ENCODE measurements at regions of chr6 and their contacts with region 1.

Region 1: DNA sequence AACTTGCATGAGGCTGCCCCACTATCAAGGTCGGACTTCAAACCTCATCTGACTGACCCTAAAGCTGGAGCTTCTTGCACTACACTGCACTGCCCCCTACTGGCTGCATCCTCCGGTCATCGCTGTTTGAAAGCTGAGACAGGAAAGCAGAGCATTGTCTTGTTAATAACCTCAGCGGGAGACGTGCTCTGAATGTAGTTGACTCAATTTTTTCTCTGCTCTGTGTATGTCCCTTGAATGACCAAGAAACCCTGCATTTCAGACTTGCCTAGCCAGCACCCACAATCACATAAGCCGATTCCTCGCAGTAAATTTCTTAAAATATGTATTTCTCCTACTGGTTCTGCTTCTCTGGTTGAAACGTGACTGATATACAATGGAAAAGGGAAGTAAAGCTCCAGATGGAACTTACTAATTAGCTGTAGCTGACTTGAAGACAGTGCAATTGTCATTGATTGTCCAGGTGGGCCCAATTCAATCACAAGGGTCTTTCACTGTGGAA is 27.8 kb downstream of the TCF21 start:
- DNase-seq: peak; percentile 87
- ATAC-seq: peak; percentile 79 to 84
- H3K4me3 ChIP-seq: no peak overlapping the region
- H3K27ac ChIP-seq: no peak overlapping the region
- H3K4me1 ChIP-seq: peaks cover 4% of the 10 kb centered on the region
- H3K27me3 ChIP-seq: no peaks in the 10 kb centered on the region
- CTCF ChIP-seq: peak; percentile 93

Region 2: DNA sequence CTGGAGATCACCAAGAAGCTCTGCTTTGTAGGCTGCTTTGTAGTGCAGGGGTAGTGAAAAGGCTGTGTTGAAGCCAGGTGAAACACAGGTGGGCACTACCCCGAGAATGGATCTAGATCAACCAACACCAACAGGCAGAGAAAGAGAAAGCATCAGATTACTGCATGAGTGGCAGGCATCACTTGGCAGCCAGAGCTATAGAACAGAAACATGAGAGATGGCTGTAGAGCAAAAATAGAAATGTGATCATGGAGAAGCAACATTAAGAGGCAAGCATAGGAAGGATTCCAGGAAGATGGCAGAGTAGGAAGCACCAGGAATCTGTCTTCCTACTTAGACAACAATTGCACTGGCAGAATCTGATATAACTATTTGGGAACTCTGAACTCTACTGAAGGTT is 338.9 kb before region 1 on chr6:
- intact Hi-C with region 1: loop called (anchors 10 kb)
- DNase-seq: no peak
- ATAC-seq: no peak
- H3K4me3 ChIP-seq: no peak overlapping the region
- H3K27ac ChIP-seq: no peak overlapping the region
- H3K4me1 ChIP-seq: no peaks in the 10 kb centered on the region
- H3K27me3 ChIP-seq: no peaks in the 10 kb centered on the region
- CTCF ChIP-seq: no peak

Measured in lower lobe of right lung (tissue), 2 donors.